AG04450 (cell line): ENCODE measurements at regions of chrX and their contacts with region 1.

Region 1: DNA sequence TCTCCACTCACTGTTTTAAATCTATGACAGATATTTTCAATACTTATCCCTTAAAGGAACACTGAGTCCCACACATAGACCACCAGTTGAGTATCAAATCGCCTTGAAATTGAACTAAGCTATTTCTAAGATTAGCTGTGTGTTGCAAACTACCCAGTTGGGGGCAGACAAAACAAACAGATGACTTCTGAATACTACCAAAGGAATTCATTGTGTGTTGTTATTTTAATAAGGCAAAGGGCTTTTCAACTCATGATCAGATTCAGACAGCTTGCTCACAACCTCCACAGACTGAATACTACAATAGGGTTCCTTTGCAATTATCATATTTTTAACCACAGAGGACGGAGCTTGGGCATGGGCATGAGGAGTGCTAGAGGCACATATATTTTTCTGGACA is 283.0 kb upstream of the GPC4 start:
- DNase-seq: peak; percentile 4
- H3K4me3 ChIP-seq: no peak overlapping the region
- H3K27ac ChIP-seq: no peak overlapping the region
- H3K27me3 ChIP-seq: no peaks in the 10 kb centered on the region
- CTCF ChIP-seq: peak; percentile 33

Region 2: GRCh38 chrX:133776072-133776471 is 77.8 kb after region 1 on chrX:
- CTCF ChIA-PET with region 1: interaction called, 29 read pairs
- POLR2A ChIA-PET with region 1: no interaction called
- DNase-seq: no peak
- H3K4me3 ChIP-seq: no peak overlapping the region
- H3K27ac ChIP-seq: no peak overlapping the region
- H3K27me3 ChIP-seq: no peaks in the 10 kb centered on the region
- CTCF ChIP-seq: peak; percentile 51

Region 3: DNA sequence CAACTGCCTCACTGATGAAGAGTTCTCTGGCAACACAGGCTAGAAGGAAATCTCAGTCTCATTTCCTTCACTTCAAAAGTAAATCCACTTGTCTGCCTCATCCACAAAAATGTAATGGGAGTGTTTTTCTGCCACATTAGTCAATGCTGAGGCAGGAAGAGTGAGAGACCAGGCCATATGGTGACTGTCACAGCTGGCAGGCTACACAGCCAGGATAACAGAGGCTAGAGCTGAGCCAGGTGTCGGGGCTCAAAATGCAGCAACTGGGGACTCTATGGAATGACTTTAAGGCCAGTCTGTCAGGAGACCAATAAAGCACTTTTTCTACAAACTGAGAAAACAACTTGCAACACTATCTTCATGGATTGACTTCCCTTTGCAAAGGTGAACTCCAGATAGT is 82.9 kb after region 1 on chrX:
- CTCF ChIA-PET with region 1: interaction called, 18 read pairs
- POLR2A ChIA-PET with region 1: no interaction called
- DNase-seq: no peak
- H3K4me3 ChIP-seq: no peak overlapping the region
- H3K27ac ChIP-seq: no peak overlapping the region
- H3K27me3 ChIP-seq: no peaks in the 10 kb centered on the region
- CTCF ChIP-seq: no peak

Region 4: DNA sequence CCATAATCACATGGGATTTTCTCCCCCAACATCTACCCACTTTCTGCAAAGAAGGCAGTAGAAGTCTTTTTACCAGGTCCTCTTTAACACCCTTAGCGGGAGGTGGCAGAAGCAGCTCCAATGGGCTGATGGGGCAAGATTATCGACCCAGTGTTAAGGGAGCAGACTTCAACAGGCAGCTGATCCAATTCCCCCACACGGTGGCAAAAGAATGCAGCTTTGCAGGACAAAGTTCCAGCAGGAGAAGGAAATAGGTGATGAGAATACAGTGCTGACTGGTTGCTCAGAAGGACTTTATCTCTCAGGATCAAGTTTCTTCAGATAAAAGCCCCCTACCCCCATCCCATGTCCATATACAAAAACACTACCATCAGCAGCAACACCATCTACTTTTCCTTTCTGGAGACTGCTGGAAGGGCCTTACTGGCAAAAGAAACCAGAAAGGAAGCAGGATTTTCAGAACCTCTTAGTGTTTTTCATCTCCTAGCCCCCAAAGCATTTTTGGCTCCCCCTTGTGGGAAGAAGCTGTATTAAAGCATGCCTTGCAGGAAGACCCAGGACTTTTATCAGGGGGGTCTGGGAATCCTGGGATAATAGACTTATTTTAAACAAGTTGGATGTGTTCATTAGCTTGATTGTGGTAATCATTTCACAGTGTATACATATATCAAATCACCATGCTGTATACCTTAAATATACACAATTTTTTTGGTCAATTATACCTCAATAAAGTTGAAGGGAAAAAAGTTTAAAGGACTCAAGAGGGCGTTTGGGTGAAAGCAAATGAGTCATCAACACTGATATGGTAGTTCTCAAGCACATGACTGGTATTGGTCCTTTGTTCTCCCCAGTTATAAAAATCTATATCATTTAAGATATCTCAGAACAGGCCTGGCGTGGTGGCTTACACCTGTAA is 140.7 kb after region 1 on chrX:
- CTCF ChIA-PET with region 1: interaction called, 20 read pairs
- POLR2A ChIA-PET with region 1: no interaction called
- DNase-seq: no peak
- H3K4me3 ChIP-seq: no peak overlapping the region
- H3K27ac ChIP-seq: no peak overlapping the region
- H3K27me3 ChIP-seq: no peaks in the 10 kb centered on the region
- CTCF ChIP-seq: peak; percentile 64

Region 5: DNA sequence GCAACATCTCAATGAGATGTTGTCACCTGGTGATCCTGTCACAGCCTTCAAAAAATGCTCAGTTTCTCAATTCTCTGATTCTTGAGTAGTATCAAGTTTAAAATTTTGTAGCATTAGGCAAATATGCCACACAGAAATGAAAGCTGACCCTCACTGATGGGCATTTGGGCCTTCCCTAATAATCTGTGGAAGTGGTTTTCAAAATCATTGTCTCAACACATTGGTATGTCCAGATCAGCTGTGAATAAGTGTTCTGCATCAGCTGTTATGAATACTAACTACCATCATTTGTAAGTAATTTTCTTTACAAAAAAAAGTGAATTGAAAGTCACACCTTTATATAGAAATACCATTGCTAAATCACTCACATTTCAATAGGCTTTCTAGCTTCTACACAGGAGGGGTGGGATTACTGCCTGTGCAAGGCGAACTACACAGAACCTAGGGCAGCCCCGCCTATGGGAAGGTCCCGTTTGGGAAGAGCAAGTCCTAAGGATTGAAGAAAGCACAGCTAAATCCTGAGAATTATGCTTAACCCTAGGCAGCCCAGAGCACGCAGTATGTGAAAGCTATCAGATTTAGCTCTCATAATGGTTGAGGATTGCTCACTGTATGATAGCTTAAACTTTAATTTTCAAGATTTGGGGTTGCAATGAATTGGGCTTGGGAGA is 213.7 kb after region 1 on chrX:
- CTCF ChIA-PET with region 1: no interaction called
- POLR2A ChIA-PET with region 1: no interaction called
- DNase-seq: no peak
- H3K4me3 ChIP-seq: no peak overlapping the region
- H3K27ac ChIP-seq: no peak overlapping the region
- H3K27me3 ChIP-seq: no peaks in the 10 kb centered on the region
- CTCF ChIP-seq: no peak